Dorsolateral prefrontal cortex (tissue), 120 donors: ENCODE measurements at regions of chr1 and their contacts with region 1.

Region 1: GRCh38 chr1:93846211-93846991 is 32.6 kb downstream of the DNTTIP2 start:
- DNase-seq: peak; percentile 77 to 90 (median 88)
- H3K4me3 ChIP-seq: peak overlapping the region; percentile 59 to 97 (median 85)
- H3K27ac ChIP-seq: peak overlapping the region; percentile 63 to 99 (median 97)
- H3K27me3 ChIP-seq: no peaks in the 10 kb centered on the region
- CTCF ChIP-seq: peak in 53 of 56 donors; percentile 19 to 64 (median 43)

Region 2: GRCh38 chr1:93304716-93305138 is 541.7 kb before region 1 on chr1:
- intact Hi-C with region 1: loop called in 1 of 2 experiments (anchors 10 kb)
- DNase-seq: peak in 3 of 10 donors; percentile 19 to 70 (median 41)
- H3K4me3 ChIP-seq: no peak overlapping the region
- H3K27ac ChIP-seq: no peak overlapping the region
- H3K27me3 ChIP-seq: no peaks in the 10 kb centered on the region
- CTCF ChIP-seq: peak; percentile 66 to 94 (median 86)

Region 3: GRCh38 chr1:93437976-93438605 is 408.3 kb before region 1 on chr1:
- intact Hi-C with region 1: loop called (anchors 5 to 10 kb)
- DNase-seq: no peak
- H3K4me3 ChIP-seq: no peak overlapping the region
- H3K27ac ChIP-seq: no peak overlapping the region
- H3K27me3 ChIP-seq: peaks cover 0 to 7% (median 0%) of the 10 kb centered on the region in 45 donors
- CTCF ChIP-seq: peak; percentile 48 to 89 (median 70)

Region 4: GRCh38 chr1:93629099-93630059 is 217.0 kb before region 1 on chr1:
- intact Hi-C with region 1: loop called (anchors 2 kb)
- DNase-seq: peak in 1 of 10 donors; percentile 38
- H3K4me3 ChIP-seq: no peak overlapping the region
- H3K27ac ChIP-seq: peak overlapping the region in 4 of 59 donors; percentile 0 to 15 (median 4)
- H3K27me3 ChIP-seq: peaks cover 0 to 4% (median 0%) of the 10 kb centered on the region in 45 donors
- CTCF ChIP-seq: peak; percentile 75 to 98 (median 88)

Region 5: GRCh38 chr1:93804412-93804811 is 42.0 kb before region 1 on chr1:
- intact Hi-C with region 1: no loop called
- DNase-seq: no peak
- H3K4me3 ChIP-seq: no peak overlapping the region
- H3K27ac ChIP-seq: no peak overlapping the region
- H3K27me3 ChIP-seq: peaks cover 0 to 3% (median 0%) of the 10 kb centered on the region in 45 donors
- CTCF ChIP-seq: no peak

Region 6: GRCh38 chr1:94417978-94418663 is 571.7 kb after region 1 on chr1 and contains the start of gene ABCD3:
- intact Hi-C with region 1: loop called in 1 of 2 experiments (anchors 5 kb)
- DNase-seq: peak; percentile 90 to 95 (median 94)
- H3K4me3 ChIP-seq: peak within 1 kb of the TSS; percentile 76 to 99 (median 96)
- H3K27ac ChIP-seq: peak within 1 kb of the TSS; percentile 80 to 99 (median 97)
- H3K27me3 ChIP-seq: no peaks in the 10 kb centered on the region
- CTCF ChIP-seq: peak in 29 of 56 donors; percentile 5 to 62 (median 25)
- total RNA-seq, gene ABCD3: 29.3 to 56.2 (median 39.9) TPM